A549 (cell line): ENCODE measurements at regions of chr2 and their contacts with region 1.

Region 1: GRCh38 chr2:172113617-172114016 is 10.9 kb upstream of the DLX2 start:
- DNase-seq: peak in 1 of 2 experiments; percentile 57
- ATAC-seq: peak; percentile 74 to 85; a peak in 5 of 6 replicates
- H3K4me3 ChIP-seq: no peak overlapping the region
- H3K27ac ChIP-seq: no peak overlapping the region
- H3K4me1 ChIP-seq: peaks cover 4% of the 10 kb centered on the region
- CTCF ChIP-seq: peak; percentile 52
- EP300 ChIP-seq: no peak
- POLR2A ChIP-seq: no peak
- RAD21 ChIP-seq: peak; percentile 62 to 77

Region 2: GRCh38 chr2:171703574-171704347 is 409.9 kb before region 1 on chr2:
- CTCF ChIA-PET with region 1: interaction called, 13 read pairs
- POLR2A ChIA-PET with region 1: no interaction called
- DNase-seq: peak; percentile 11 to 54
- ATAC-seq: peak; percentile 30 to 81; a peak in 4 of 6 replicates
- H3K4me3 ChIP-seq: no peak overlapping the region
- H3K27ac ChIP-seq: no peak overlapping the region
- H3K4me1 ChIP-seq: peaks cover 35% of the 10 kb centered on the region
- CTCF ChIP-seq: peak; percentile 54
- EP300 ChIP-seq: no peak
- POLR2A ChIP-seq: no peak
- RAD21 ChIP-seq: peak; percentile 44 to 57; a peak in 4 of 5 replicates

Region 3: DNA sequence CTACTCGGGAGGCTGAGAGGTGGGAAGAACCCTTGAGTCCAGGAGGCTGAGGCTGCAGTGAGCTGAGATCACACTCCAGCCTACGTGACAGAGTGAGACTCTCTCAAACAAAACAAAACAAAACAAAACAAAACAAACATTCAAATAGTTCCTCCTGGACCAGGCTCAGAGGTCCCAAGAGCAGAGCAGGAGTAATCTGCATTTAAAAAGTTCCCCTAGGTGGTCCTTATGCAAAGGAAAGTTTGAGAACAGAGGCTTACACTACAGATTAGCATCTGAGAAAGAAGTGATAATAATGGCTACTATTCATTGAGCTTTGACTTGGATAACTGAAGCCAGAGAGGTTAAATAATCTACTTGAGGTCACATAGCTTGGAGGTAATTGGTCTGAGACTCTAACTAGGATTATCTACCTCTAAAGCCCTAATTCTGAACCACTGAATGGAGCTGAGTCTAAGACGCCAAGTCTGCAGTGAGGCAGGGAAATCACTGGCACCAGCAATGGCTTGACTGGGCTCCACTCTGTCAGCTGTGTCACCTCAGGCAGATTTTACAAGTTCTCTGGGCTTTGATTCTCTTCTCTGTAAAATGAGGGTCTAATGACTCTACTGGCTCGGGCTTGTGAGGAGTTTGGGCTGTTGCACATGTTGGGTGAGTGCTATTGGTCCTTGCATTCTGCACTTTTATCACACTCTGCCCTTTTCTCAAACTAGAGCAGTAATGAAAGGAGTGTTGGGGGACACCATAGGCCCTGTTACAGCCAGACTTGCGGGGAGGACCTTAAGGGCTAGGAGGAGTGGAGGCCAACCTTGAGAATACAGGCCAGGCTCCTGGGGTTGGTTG is 18.3 kb after region 1 on chr2:
- CTCF ChIA-PET with region 1: interaction called, 32 read pairs
- POLR2A ChIA-PET with region 1: no interaction called
- DNase-seq: no peak
- ATAC-seq: no peak; a peak in 1 of 6 replicates
- H3K4me3 ChIP-seq: no peak overlapping the region
- H3K27ac ChIP-seq: no peak overlapping the region
- H3K4me1 ChIP-seq: no peaks in the 10 kb centered on the region
- CTCF ChIP-seq: no peak
- EP300 ChIP-seq: no peak
- POLR2A ChIP-seq: no peak
- RAD21 ChIP-seq: no peak